Head of caudate nucleus (tissue), 42 donors: ENCODE measurements at regions of chr15 and their contacts with region 1.

Region 1: DNA sequence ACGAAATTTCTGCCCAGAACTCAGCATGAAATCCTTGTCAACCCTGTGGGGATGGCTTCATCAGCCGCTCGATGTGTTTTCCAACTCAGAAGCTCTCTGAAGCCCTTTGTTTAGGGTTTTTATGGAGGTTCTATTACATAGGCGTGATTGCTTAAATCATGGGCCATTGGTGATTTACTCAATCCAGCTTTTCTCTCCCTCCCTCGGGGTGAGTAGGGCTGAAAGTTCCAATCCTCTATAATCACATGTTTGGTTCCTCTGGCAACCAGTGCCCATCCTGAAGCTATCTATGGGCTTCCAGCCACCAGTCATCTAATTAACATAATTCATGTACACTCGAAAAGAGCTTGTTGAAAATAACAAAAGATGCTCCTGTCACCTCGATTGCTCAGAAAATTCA is 51.6 kb downstream of the GATM start:
- DNase-seq: peak in 20 of 42 donors; percentile 10 to 77 (median 39)

Region 2: GRCh38 chr15:45279024-45279698 is 47.6 kb before region 1 on chr15:
- intact Hi-C with region 1: no loop called
- DNase-seq: peak; percentile 96 to 100 (median 99)

Region 3: GRCh38 chr15:45372041-45372995 is 45.6 kb after region 1 on chr15:
- intact Hi-C with region 1: loop called (anchors 5 kb)
- DNase-seq: peak in 31 of 42 donors; percentile 17 to 90 (median 74)

Region 4: DNA sequence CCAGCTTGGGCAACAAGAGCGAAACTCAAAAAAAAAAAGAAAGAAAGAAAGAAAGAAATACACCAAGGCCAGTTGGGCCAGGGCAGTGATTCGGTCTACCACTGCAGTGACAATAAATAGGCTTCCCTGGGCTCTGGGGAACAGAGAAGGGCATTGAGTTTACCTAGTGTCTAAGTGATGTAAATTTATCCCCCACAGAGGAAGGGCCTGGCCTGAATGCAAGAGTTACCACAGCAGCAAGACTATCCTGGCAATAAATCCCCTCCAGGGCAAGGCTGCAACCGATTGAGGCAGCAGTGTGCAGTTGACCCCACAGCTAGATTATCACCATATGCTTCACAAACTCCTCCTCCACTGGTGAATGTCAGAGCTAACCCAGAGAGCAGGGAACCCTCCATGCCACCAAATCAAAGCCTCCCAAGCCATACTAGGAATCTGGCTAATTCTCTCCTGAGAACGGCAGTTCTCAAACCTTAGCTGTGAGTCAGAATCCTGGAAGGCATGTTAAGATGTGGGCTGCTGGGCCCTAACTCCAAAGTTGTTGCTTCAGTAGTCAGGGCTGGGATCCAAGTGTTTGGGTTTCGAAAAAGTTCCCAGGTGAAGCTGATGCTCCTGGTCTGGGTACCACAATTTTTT is 115.9 kb after region 1 on chr15:
- intact Hi-C with region 1: no loop called
- DNase-seq: no peak

Region 5: DNA sequence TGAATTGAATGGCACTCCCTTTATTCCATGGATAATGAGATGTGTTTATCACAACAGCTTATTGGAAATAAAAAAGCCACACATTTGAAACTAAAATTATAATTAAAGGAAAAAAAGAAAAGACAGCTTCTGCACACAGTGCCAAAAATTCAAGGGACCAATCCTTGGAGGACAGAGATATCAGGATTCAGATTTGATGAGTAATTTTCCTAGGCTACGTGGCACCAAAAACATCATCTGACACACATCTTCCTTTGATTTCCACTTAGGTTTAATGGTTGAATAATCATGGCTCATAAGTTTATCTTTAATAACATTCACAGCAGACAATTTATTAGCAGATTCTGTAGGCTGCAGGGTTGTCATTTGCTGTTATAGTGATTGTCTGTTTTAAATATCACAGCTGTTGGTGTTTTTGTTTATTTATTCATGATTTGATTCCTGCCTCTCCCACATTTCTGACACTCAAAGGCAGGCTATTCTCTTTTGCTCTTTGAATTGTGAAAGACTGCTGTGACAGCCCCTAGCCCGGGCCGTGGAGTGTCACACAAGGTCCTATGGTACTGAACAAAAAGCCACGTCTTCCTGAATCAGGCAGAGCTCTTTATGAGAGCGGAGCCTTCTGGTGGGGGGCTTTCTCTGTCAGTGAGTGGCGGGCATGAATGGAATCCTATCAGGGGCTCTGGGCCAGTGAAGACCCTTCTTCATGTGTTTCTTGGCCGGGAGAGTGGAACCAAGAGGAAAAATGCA is 1016.6 kb after region 1 on chr15:
- intact Hi-C with region 1: no loop called
- DNase-seq: peak in 18 of 42 donors; percentile 2 to 40 (median 9)